ENCODE measurements at regions of chr20 and their contacts with region 1.

Region 1: DNA sequence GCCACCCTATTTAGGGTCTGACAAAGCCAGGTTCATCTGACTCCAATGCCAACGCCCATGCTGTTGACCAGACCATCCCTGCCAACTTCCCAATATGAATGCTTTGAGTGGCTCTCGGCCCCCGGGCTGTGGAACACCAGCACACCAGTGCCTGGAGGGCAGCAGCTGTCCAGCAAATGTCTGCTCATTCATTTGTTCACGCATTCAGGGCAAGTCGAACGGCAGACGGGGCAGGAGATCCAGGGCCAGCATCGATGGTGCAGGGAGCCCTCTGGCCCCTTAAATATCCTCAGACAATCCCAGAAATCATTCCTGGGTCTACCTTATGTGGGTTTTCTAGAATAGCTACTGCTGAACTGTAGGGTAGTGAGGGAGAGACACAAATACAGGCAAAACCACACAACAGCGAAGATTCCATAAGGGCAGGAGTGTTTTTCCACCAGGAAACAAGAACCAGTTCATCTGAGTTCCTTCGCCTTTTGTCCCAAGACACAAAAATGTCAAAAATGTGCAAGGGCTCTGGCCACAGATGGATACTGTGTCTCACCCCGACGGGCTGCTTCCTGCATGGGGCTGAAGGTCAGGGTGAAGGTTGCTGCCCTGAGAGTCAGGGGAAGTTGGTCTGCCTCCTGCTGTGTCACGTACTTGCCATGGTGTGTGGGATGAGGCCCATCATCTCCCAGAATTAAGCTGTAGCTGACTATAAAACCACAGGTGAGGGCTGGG is 15.5 kb downstream of the RIPOR3 start:
- DNase-seq: no peak

Region 2: DNA sequence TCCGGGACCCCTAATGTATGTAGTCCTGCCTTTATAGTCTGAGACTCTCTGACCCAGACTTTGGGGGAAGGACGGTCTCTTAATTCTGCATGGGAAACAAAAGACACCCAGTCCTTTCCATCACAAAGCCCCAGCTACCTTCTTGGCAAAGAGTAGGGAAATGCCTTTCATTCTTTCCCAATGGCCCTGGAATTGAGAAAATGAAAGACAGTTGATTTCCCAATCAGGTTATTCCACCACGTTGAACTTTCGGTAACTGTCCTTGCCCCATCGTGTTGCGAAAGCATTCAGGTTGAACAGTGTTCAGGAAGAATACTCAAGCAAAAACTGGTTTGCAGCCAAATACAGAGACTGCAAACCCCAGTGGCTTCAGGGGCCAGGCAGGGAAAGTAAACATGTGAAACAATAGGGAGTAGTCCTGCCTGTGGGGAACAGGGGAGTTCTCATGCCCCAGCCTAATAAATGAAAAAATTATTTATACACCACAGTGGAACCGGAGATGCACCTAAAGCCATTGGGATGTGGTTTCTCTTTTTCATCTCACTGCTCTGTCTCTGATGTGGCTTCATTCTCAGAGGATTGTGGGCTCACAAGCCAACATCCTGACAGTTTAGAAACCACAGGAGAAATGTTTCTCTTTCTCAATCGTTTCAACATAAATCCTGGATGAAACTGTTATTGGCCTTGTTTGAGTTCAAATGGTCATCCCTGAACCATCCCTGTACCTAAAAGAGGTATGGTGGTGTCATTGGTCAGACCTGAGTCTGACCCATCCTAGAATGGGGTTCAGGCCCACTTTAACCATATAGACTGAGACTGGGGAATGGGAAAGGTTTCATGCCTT is 907.4 kb before region 1 on chr20:
- intact Hi-C with region 1: loop called in 1 of 2 experiments (anchors 5 kb)
- DNase-seq: no peak